Vagina (tissue), 2 donors: ENCODE measurements at regions of chr14 and their contacts with region 1.

Region 1: GRCh38 chr14:70972107-70972976 is 65.1 kb downstream of the PCNX1 start:
- DNase-seq: no peak
- H3K4me3 ChIP-seq: no peak overlapping the region
- H3K27ac ChIP-seq: no peak overlapping the region
- H3K4me1 ChIP-seq: peaks cover 9% of the 10 kb centered on the region
- H3K27me3 ChIP-seq: no peaks in the 10 kb centered on the region
- CTCF ChIP-seq: peak; percentile 60 to 85 (median 76)
- POLR2A ChIP-seq: no peak

Region 2: DNA sequence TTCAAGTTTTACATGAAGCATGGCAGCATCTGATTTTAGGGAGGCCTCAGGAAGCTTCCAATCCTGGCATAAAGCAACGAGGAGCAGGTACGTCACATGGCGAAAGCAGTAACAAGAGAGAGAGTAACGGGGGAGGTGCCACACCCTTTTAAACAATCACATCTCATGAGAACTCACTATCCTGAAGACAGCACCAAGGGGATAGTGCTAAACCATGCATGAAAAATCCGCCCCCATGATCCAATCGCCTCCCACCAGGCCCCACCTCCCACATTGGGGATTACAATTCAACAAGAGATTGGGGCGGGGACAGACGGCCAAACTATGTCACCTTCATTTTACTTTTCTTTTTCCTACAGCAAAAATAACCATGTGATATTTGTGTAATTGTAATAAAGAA is 155.8 kb before region 1 on chr14:
- intact Hi-C with region 1: loop called (anchors 5 kb)
- DNase-seq: no peak
- H3K4me3 ChIP-seq: no peak overlapping the region
- H3K27ac ChIP-seq: no peak overlapping the region
- H3K4me1 ChIP-seq: peaks cover 5% of the 10 kb centered on the region
- H3K27me3 ChIP-seq: no peaks in the 10 kb centered on the region
- CTCF ChIP-seq: no peak
- POLR2A ChIP-seq: no peak